Lower lobe of right lung (tissue), 2 donors: ENCODE measurements at regions of chr9 and their contacts with region 1.

Region 1: DNA sequence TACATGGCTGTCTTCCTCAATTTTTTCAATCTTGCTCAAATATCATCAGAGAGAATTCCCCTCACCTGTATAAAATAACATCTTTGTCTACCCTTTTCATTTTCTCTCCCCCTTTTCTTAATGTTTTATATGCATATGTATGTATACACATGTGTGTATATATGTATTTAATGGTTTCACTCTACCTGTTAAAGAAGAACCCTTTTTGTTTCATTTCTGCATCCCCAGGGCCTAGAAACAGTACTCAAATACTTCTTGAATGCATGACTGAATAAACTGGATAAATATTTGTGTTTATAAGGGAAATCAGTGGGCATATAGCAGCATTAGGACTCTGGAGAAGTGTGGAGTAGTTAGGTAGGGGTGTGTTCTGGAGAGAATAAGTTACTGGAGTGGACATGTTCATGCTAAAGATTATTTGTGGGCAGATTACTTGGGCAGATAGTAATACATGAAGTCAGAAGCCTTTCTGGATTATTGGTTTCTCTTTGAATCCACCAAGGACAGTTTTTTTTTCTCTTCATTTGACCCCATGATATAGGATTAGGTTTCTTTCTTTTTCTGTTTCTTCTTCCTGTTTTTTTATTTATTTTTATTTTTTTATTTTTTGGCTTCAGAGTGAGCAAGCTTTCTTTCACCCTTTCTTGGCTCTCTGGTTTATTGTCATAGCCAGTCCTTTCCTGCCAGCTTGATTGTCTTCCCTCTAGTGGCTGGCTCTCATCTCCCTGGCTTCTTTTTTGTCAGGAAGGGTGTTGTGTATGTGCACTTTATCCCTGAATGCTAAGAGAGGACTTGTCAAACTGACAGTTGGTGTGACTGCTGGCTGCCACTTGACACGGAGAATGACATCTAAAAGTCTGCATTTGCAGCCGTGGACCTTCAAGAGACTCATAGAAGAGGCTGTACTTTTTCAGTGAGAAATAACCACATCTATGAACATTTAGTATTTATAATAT is 89.3 kb downstream of the ZCCHC7 start:
- DNase-seq: no peak
- ATAC-seq: no peak
- H3K4me3 ChIP-seq: no peak overlapping the region
- H3K27ac ChIP-seq: no peak overlapping the region
- H3K4me1 ChIP-seq: no peaks in the 10 kb centered on the region
- H3K27me3 ChIP-seq: no peaks in the 10 kb centered on the region
- CTCF ChIP-seq: no peak

Region 2: DNA sequence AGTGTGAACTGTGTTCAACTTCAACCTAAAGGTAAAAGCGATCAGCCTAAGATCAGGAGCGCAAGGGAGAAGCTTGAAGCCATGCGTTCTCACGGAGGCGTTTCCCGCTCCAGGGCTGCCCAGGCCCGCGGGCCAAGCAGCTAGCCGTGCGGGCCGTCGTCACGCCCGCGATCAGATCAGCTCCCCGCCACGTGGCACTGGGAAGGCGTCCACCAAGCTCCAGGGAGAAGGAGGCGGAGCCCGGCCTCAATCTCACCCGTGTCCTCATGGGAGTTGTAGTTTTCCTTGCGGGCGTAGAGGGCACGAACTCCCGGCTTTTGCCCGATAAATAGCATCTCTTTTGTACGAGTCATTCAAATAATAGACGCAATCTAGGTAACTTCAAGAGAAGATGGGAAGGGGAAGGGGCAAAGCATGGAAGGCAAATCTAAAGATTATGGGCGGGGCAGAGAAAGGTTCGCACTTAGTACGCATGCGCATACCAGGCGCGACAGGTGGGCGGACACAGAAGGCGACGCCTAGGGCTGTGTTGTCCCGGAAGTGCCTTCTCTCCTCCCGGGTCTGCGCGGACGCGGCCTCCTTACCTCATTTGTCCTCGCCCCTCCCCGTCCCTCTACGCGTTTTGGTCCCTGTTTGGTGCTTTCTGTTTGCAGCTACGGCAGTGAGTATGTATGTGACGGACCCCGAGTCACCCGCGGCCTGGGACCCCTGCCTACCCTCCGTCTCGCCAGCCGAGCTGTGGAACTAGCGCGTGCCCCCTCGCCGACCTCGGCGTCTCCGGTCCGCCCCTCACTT is 130.1 kb before region 1 on chr9:
- intact Hi-C with region 1: loop called (anchors 10 kb)
- DNase-seq: peak; percentile 96
- ATAC-seq: peak; percentile 99
- H3K4me3 ChIP-seq: peak overlapping the region; percentile 87
- H3K27ac ChIP-seq: peak overlapping the region; percentile 91
- H3K4me1 ChIP-seq: peaks cover 17% of the 10 kb centered on the region
- H3K27me3 ChIP-seq: peaks cover 5% of the 10 kb centered on the region
- CTCF ChIP-seq: no peak

Region 3: DNA sequence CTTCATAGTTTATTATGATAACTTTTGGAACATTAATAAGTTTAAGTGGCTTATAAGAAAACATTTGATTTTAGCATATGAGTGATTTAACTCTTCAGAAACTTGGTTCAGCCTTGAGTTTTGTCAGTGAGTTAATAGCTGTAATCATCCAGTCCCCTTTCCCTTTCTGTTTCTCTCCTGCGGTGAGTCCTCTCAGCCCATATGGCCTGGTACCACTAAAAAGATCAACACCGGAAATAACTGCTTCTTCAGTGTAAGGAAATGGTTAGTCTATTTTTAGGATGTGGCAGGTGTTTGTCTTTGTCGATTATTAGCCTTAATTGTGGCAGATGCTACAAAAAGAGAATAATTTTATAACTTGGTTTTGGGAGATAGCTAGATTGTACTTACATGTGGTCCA is 92.6 kb after region 1 on chr9:
- intact Hi-C with region 1: no loop called
- DNase-seq: no peak
- ATAC-seq: peak; percentile 42
- H3K4me3 ChIP-seq: no peak overlapping the region
- H3K27ac ChIP-seq: no peak overlapping the region
- H3K4me1 ChIP-seq: no peaks in the 10 kb centered on the region
- H3K27me3 ChIP-seq: no peaks in the 10 kb centered on the region
- CTCF ChIP-seq: no peak

Region 4: GRCh38 chr9:37333288-37333687 is 123.6 kb after region 1 on chr9:
- intact Hi-C with region 1: no loop called
- DNase-seq: no peak
- ATAC-seq: no peak
- H3K4me3 ChIP-seq: no peak overlapping the region
- H3K27ac ChIP-seq: no peak overlapping the region
- H3K4me1 ChIP-seq: no peaks in the 10 kb centered on the region
- H3K27me3 ChIP-seq: no peaks in the 10 kb centered on the region
- CTCF ChIP-seq: no peak

Region 5: GRCh38 chr9:37820142-37820541 is 610.4 kb after region 1 on chr9:
- intact Hi-C with region 1: no loop called
- DNase-seq: no peak
- ATAC-seq: no peak
- H3K4me3 ChIP-seq: no peak overlapping the region
- H3K27ac ChIP-seq: no peak overlapping the region
- H3K4me1 ChIP-seq: no peaks in the 10 kb centered on the region
- H3K27me3 ChIP-seq: no peaks in the 10 kb centered on the region
- CTCF ChIP-seq: no peak